BJ (cell line): ENCODE measurements at regions of chr4 and their contacts with region 1.

Region 1: DNA sequence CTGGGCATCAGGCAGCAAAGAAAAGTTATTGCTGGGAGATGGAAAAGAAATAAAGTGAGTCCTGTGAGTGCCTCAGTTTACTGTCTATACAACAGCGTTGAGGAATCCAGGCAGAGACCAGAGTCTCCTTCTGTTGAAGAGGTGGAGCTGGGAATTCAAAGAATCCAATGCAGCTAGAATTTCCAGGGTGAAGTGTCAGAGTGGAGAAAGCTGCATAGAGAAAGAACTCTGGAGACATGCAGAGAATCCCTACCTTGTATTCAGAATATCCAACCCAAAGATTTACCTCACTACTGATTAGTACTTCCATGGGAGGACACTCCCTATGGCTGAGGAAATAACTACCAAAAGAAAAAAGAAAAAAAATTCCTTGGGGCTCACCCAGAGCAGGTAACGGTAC is 20.3 kb downstream of the TLL1 start:
- DNase-seq: no peak
- H3K4me3 ChIP-seq: no peak overlapping the region
- H3K27me3 ChIP-seq: no peaks in the 10 kb centered on the region
- CTCF ChIP-seq: no peak

Region 2: GRCh38 chr4:165864271-165864670 is 29.0 kb before region 1 on chr4:
- CTCF ChIA-PET with region 1: no interaction called
- POLR2A ChIA-PET with region 1: no interaction called
- DNase-seq: no peak
- H3K4me3 ChIP-seq: no peak overlapping the region
- H3K27me3 ChIP-seq: peaks cover 1% of the 10 kb centered on the region; the same call in 1 of the 2 replicates
- CTCF ChIP-seq: no peak; the same call in 1 of the 2 replicates

Region 3: DNA sequence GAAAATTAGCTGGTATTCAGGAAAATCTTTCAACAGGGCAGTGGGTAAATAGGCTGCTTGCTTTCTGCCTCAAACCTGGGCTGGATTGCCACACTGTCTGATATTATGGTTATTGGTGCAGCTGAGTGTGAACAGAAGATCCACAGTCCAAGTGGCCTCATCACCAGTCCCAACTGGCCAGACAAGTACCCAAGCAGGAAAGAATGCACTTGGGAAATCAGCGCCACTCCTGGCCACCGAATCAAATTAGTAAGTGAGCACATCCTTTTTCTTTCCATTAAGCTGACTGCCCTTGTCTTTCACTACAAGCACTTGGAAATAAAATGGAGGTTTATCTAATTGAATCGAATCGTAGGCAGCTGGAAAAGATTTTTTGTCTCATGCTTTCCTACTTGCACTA is 184.5 kb after region 1 on chr4:
- CTCF ChIA-PET with region 1: no interaction called
- POLR2A ChIA-PET with region 1: interaction called, 14 read pairs
- DNase-seq: no peak
- H3K4me3 ChIP-seq: no peak overlapping the region
- H3K27me3 ChIP-seq: no peaks in the 10 kb centered on the region
- CTCF ChIP-seq: no peak